Activated CD4-positive, alpha-beta memory T cell treated with anti-CD3 and anti-CD28 coated beads, Interleukin-2, amount 10 ng/mL, durations not matched to agents 7 days and 5 days (primary cell): ENCODE measurements at regions of chr4 and their contacts with region 1.

Region 1: DNA sequence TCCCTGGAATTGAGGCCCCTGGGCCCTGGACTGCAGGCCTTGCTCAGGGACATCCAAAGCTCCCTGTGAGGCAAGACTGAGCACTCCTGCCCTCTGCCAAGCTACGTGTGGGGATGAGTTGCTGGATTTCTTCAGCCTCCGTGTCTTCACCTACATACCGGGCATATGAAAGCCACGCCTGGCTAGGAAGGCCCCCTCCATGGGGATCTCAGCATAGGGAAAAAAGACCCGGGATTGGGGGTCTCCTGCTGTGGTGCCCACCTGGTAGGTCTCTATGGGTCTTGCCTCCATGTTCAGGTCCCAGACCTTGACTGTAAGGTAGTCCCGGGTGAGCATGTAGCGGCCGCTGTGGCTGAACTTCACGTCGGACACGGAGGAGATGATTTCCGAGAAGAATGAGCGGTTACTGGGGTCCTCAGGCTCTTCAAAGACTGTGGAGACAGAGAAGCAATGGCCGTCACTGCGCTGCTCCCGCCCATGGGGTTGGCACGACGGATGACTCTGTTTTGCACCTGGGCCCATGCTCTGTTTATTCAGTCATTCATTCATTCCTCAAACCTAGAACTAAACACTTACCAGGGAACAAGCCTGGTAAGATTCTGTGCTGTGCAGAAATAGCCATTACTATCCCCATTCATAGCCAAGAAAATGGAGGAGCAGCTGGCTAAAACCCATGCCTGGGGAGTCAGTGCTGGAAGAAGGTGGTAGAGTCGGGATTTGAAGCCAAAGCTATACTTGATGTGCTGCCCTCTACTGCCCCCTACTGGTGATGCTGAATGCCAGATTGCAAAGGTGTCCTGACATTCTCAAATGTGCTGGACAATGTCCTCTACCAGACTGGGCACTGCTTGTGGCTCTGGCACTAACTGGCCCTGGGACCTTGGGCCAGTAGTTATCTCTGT is 63.9 kb downstream of the WFS1 start:
- DNase-seq: peak; percentile 45
- H3K4me3 Mint-ChIP-seq: no peak overlapping the region
- H3K27ac Mint-ChIP-seq: no peak overlapping the region
- H3K4me1 Mint-ChIP-seq: peaks cover 18% of the 10 kb centered on the region
- H3K27me3 Mint-ChIP-seq: peaks cover 23% of the 10 kb centered on the region

Region 2: DNA sequence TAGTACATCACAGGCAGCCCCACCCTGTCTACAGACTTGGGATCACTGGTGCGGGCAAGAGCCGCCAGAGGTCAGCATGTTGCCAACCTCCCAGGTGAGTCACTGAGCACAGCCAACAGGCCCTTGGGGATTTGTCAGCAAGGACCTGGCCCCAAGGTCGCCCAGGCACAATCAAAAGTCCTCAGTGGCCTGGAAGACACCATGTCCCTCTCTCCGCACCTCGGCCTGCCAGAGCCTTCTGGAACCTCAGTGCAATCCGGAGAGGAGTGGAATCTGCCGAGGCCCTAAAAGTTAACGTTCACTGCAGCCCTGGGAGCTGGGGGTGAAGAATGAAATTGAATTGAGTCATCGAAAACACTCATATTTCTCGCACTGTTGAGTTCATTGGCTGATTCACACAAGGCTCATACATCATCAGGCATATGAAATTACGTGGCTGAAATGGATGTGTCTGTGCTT is 10.4 kb after region 1 on chr4:
- CTCF ChIA-PET with region 1: interaction called, 19 read pairs
- POLR2A ChIA-PET with region 1: no interaction called
- DNase-seq: no peak
- H3K4me3 Mint-ChIP-seq: no peak overlapping the region
- H3K27ac Mint-ChIP-seq: no peak overlapping the region
- H3K4me1 Mint-ChIP-seq: peaks cover 11% of the 10 kb centered on the region
- H3K27me3 Mint-ChIP-seq: peaks cover 24% of the 10 kb centered on the region